Prostate gland (tissue), 2 donors: ENCODE measurements at regions of chr5 and their contacts with region 1.

Region 1: GRCh38 chr5:59799668-59800346 is 93.7 kb downstream of the PDE4D start:
- DNase-seq: peak; percentile 42
- H3K4me3 ChIP-seq: no peak overlapping the region
- H3K27ac ChIP-seq: peak overlapping the region; percentile 48 to 68
- H3K4me1 ChIP-seq: no peaks in the 10 kb centered on the region
- H3K27me3 ChIP-seq: no peaks in the 10 kb centered on the region
- CTCF ChIP-seq: peak; percentile 80 to 93 (median 90)
- POLR2A ChIP-seq: no peak

Region 2: GRCh38 chr5:59193616-59194319 is 606.0 kb before region 1 on chr5:
- intact Hi-C with region 1: loop called (anchors 5 kb)
- DNase-seq: no peak
- H3K4me3 ChIP-seq: no peak overlapping the region
- H3K27ac ChIP-seq: no peak overlapping the region
- H3K4me1 ChIP-seq: no peaks in the 10 kb centered on the region
- H3K27me3 ChIP-seq: no peaks in the 10 kb centered on the region
- CTCF ChIP-seq: no peak
- POLR2A ChIP-seq: no peak

Region 3: DNA sequence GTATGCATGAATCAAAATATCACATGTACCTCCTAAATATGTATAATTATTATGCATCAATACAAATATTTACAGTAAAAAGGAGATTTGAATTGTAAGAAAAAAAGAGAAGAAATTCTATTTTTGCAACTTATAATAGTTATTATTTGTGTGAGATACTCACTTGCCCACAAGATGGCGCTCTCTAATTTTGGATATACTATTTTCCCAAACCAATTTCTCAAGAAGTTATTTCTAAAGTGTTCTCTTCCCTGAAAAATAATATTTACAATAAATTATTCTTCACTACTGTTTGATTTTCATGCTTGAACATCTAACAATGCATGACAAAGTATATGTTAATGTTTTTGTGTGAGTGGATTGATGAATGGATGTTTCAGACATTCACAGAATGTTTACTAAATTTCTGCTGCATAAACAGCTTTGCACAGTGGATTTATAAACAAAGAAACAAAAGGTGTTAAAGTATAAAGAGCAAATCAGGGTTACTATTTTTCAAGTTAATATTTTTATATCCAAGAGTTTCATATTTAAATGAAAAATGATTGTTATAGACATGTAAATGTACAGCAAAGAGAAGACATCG is 409.6 kb before region 1 on chr5:
- intact Hi-C with region 1: loop called (anchors 5 kb)
- DNase-seq: peak; percentile 29
- H3K4me3 ChIP-seq: no peak overlapping the region
- H3K27ac ChIP-seq: no peak overlapping the region
- H3K4me1 ChIP-seq: no peaks in the 10 kb centered on the region
- H3K27me3 ChIP-seq: no peaks in the 10 kb centered on the region
- CTCF ChIP-seq: peak; percentile 70 to 75 (median 74)
- POLR2A ChIP-seq: no peak

Region 4: DNA sequence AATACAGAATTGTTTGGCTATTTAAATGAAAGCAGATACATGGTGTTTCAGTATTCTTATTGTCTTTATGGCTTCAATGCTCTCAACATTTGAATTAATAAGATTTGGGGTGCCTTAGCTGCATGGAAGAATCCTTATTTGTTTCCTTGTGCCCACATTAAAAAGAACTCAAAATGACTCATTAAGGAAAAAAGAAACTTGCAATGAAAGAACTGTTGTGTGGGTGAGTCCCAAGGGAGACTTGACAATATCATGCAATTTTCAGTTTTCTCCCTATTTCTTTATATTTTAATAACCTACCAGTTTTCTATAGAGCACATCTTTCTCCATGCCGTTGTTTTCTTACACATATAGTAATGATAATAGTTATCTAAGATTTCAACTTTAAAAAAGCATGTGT is 310.3 kb before region 1 on chr5:
- intact Hi-C with region 1: no loop called
- DNase-seq: no peak
- H3K4me3 ChIP-seq: no peak overlapping the region
- H3K27ac ChIP-seq: no peak overlapping the region
- H3K4me1 ChIP-seq: no peaks in the 10 kb centered on the region
- H3K27me3 ChIP-seq: no peaks in the 10 kb centered on the region
- CTCF ChIP-seq: no peak
- POLR2A ChIP-seq: no peak

Region 5: GRCh38 chr5:59506285-59506877 is 293.4 kb before region 1 on chr5:
- intact Hi-C with region 1: loop called (anchors 10 kb)
- DNase-seq: no peak
- H3K4me3 ChIP-seq: no peak overlapping the region
- H3K27ac ChIP-seq: no peak overlapping the region
- H3K4me1 ChIP-seq: no peaks in the 10 kb centered on the region
- H3K27me3 ChIP-seq: no peaks in the 10 kb centered on the region
- CTCF ChIP-seq: peak; percentile 29 to 59 (median 50)
- POLR2A ChIP-seq: no peak

Region 6: DNA sequence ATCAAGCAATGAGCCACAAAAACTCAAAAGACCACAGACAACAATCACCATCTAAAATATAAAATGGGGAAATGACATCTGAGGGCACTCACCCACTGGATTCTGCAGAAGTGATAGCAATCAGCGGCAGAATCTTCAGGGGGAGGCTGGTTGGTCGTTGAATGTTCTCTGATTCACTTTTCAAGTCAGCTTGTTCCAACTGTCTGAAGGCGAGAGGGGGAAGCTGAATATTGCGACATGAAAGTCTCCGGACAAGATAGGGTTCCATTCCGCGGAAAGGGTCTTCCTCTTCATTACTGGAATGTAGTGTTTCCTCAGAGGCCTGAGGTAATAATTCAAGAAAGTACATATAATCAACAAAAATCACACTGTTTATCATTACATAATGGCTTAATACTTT is 188.6 kb after region 1 on chr5:
- intact Hi-C with region 1: no loop called
- DNase-seq: no peak
- H3K4me3 ChIP-seq: no peak overlapping the region
- H3K27ac ChIP-seq: no peak overlapping the region
- H3K4me1 ChIP-seq: no peaks in the 10 kb centered on the region
- H3K27me3 ChIP-seq: no peaks in the 10 kb centered on the region
- CTCF ChIP-seq: no peak
- POLR2A ChIP-seq: no peak

Region 7: DNA sequence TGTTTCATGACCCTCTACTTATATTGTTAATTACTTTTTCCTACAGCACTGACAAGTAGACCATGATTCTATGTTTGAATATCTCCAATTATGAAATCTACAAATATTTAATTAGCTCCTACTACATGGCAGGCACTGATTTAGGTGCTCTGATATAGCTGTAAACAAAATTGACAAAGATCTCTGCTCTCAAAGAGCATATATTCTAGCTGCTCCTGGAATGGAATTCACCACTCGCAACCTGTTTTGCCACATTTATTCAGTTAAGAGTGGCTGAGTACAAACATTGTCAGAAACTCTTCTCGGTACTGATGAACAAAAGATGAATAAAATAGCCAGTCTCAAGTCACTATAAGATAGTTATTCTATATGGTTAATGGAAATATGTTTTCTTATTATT is 207.9 kb after region 1 on chr5:
- intact Hi-C with region 1: no loop called
- DNase-seq: no peak
- H3K4me3 ChIP-seq: no peak overlapping the region
- H3K27ac ChIP-seq: no peak overlapping the region
- H3K4me1 ChIP-seq: no peaks in the 10 kb centered on the region
- H3K27me3 ChIP-seq: no peaks in the 10 kb centered on the region
- CTCF ChIP-seq: no peak
- POLR2A ChIP-seq: no peak